MCF 10A (cell line): ENCODE measurements at regions of chr2 and their contacts with region 1.

Region 1: DNA sequence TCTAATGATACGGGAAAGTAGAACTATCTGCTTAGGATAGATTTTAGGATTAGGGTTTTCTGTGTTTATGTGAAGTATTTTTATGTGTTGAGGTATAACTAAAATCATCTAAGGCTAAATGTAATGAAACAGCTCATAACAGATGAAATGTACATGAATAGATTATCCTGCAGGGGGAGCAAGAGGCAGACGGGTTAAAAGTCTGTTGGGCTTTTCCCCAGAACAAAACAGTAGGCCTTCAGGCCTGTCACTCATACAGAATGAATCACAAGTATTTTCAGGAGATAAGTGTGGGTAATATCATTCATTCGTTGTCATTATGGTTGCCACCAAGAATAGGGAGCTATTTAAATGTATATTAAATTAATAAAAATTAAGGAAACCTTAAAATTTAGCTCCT is 107.9 kb upstream of the IL1R2 start:
- DNase-seq: peak; percentile 76
- H3K4me3 Mint-ChIP-seq: no peak overlapping the region
- H3K27ac Mint-ChIP-seq: no peak overlapping the region
- H3K4me1 Mint-ChIP-seq: no peaks in the 10 kb centered on the region
- H3K27me3 Mint-ChIP-seq: no peaks in the 10 kb centered on the region
- CTCF ChIP-seq: peak; percentile 42

Region 2: DNA sequence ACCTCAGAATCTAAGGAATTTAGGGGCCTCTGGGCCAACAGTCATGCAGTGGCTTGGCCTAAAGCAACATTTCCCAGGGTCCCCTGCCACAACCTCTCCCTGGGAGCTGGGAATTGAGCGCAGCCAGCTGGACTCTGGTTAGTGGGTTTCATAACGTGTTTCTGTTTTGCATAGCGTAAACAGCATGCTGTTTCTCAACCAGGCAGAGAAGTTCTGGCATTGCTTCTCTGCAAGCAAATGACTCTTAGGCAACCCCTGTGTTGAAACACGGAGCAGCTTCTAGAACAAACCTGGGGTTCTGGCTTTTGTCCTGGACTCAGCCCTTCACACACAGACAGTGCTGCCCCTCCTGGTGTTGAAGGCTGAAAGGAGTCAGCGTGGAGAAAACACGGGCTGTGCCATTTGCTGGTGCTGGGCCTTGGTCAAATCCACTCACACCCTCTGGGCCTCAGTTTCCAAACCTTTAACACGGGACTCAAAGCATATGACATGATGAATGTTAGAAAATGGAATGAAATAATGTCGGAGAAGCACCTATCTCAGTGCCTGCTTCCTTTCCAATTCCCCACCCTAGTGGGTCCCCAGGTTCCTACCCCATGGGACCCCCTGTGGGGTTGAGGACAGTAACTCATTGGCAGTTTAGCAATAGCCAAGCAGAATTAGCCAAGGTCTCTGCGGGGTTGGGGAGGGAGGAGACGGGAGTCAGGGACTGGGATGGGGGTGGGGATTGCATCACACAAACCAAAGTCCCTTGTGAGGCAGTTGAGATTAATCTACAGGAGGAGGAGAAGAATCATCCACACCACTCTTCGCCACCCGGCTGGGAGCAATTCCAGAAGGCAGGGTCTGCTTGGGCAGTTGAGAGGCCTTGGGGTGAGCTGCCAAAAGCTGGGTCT is 77.7 kb after region 1 on chr2:
- CTCF ChIA-PET with region 1: interaction called, 33 read pairs
- POLR2A ChIA-PET with region 1: interaction called, 7 read pairs
- intact Hi-C with region 1: no loop called
- DNase-seq: peak; percentile 99
- H3K4me3 Mint-ChIP-seq: peak overlapping the region; percentile 50
- H3K27ac Mint-ChIP-seq: peak overlapping the region; percentile 91
- H3K4me1 Mint-ChIP-seq: peaks cover 29% of the 10 kb centered on the region
- H3K27me3 Mint-ChIP-seq: no peaks in the 10 kb centered on the region
- CTCF ChIP-seq: no peak

Region 3: GRCh38 chr2:101998896-101999789 is 115.3 kb after region 1 on chr2:
- CTCF ChIA-PET with region 1: interaction called, 19 read pairs
- POLR2A ChIA-PET with region 1: no interaction called
- intact Hi-C with region 1: no loop called
- DNase-seq: peak; percentile 21
- H3K4me3 Mint-ChIP-seq: no peak overlapping the region
- H3K27ac Mint-ChIP-seq: no peak overlapping the region
- H3K4me1 Mint-ChIP-seq: no peaks in the 10 kb centered on the region
- H3K27me3 Mint-ChIP-seq: peaks cover 2% of the 10 kb centered on the region
- CTCF ChIP-seq: no peak

Region 4: GRCh38 chr2:102155642-102156491 is 272.0 kb after region 1 on chr2:
- CTCF ChIA-PET with region 1: interaction called, 17 read pairs
- POLR2A ChIA-PET with region 1: no interaction called
- intact Hi-C with region 1: no loop called
- DNase-seq: peak; percentile 62
- H3K4me3 Mint-ChIP-seq: no peak overlapping the region
- H3K27ac Mint-ChIP-seq: peak overlapping the region; percentile 94
- H3K4me1 Mint-ChIP-seq: peaks cover 30% of the 10 kb centered on the region
- H3K27me3 Mint-ChIP-seq: no peaks in the 10 kb centered on the region
- CTCF ChIP-seq: no peak

Region 5: GRCh38 chr2:102442967-102443828 is 559.3 kb after region 1 on chr2:
- CTCF ChIA-PET with region 1: interaction called, 28 read pairs
- POLR2A ChIA-PET with region 1: interaction called, 5 read pairs
- intact Hi-C with region 1: no loop called
- DNase-seq: peak; percentile 48
- H3K4me3 Mint-ChIP-seq: no peak overlapping the region
- H3K27ac Mint-ChIP-seq: no peak overlapping the region
- H3K4me1 Mint-ChIP-seq: peaks cover 12% of the 10 kb centered on the region
- H3K27me3 Mint-ChIP-seq: no peaks in the 10 kb centered on the region
- CTCF ChIP-seq: peak; percentile 84